Vagina (tissue), 2 donors: ENCODE measurements at regions of chr1 and their contacts with region 1.

Region 1: DNA sequence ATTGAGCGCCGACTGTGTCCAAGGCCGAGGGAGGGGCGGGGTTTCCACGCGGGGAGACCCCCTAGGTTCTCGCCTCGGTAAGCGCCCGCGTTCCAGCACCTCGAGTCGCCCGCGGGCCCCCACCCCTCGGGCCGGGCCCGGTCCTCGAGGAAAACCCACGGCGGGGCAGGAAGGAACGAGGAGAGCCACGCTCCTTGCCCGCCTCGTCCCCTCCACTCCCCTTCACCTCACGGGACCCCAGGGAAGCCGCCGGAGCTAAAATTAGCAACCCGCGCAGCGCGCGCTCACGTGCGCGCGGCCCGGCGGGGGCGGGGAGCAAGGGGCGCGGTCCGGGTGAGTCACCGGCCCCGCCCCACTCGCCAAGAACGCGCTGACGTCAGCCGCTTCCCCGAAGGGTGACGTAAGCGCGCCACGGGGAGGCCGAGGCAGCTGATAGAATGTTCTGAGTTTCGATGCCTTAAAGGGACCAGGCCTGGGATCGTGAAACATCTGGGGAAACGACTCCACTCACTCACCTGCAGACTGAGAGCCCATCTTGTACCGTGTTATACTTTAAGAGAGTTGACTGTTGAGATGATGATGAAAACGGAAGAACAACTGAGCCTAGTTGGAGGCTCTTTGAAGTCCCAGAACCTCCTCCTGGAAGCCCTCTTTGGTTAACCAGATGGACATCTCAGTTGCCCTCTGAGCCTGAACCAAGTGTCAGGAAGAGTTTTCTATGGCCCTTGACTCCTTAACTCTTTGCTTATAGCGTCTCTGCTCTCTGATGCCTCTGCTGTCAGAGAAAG is 49.7 kb upstream of the ATF3 start:
- DNase-seq: peak in 1 of 2 donors; percentile 96
- H3K4me3 ChIP-seq: peak overlapping the region; percentile 74 to 79
- H3K27ac ChIP-seq: peak overlapping the region; percentile 99
- H3K4me1 ChIP-seq: peaks cover 4% of the 10 kb centered on the region
- H3K27me3 ChIP-seq: no peaks in the 10 kb centered on the region
- CTCF ChIP-seq: peak in 1 of 3 experiments; percentile 5
- POLR2A ChIP-seq: peak; percentile 9 to 77

Region 2: DNA sequence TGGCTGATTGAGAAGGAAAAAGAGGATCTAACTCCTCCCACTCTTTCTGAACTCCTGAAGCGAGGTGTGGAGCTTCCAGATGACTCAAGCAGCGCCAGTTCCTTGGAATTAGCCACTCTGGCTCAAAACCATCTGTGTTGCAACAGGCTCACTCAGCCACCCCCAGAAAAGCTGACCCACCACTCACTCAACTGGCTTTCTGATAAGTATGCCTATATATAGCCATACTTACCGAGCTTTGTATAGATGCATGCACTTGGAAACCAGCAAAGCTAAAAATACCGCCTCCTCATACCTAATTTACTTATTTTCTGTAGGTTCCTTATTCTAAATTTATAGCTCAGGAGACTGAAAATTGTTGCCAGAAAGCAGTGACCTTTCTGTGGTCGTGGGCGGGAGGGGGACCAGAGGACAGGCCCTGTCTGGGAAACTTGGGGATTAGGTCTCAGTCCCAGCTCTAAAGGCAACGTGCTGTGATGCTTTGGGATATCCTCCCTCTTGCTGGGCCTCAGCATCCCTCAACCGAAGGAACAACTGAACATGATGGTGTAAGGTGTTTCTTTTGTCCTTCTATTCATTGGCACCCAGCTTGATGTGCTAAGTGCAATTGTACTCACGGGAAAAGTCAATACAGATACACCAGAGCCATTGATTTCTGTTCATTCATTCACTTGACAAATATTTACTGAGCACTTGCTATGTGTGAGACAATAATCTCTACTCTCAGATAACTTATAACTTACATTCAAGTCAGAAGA is 60.4 kb before region 1 on chr1:
- intact Hi-C with region 1: loop called (anchors 10 kb)
- DNase-seq: peak in 1 of 2 donors; percentile 52
- H3K4me3 ChIP-seq: no peak overlapping the region
- H3K27ac ChIP-seq: no peak overlapping the region
- H3K4me1 ChIP-seq: no peaks in the 10 kb centered on the region
- H3K27me3 ChIP-seq: no peaks in the 10 kb centered on the region
- CTCF ChIP-seq: no peak
- POLR2A ChIP-seq: no peak

Region 3: GRCh38 chr1:212608209-212608955 is 49.5 kb after region 1 on chr1 and contains the start of gene ATF3:
- intact Hi-C with region 1: loop called (anchors 2 kb)
- DNase-seq: peak; percentile 100
- H3K4me3 ChIP-seq: peak within 1 kb of the TSS; percentile 78 to 82
- H3K27ac ChIP-seq: peak within 1 kb of the TSS; percentile 99
- H3K4me1 ChIP-seq: peaks cover 44% of the 10 kb centered on the region
- H3K27me3 ChIP-seq: no peaks in the 10 kb centered on the region
- CTCF ChIP-seq: no peak
- POLR2A ChIP-seq: peak in 1 of 2 donors; percentile 99
- total RNA-seq, gene ATF3: 34.9 TPM